Activated CD4-positive, alpha-beta T cell treated with anti-CD3 and anti-CD28 coated beads for 36 hours (primary cell): ENCODE measurements at regions of chr19 and their contacts with region 1.

Region 1: DNA sequence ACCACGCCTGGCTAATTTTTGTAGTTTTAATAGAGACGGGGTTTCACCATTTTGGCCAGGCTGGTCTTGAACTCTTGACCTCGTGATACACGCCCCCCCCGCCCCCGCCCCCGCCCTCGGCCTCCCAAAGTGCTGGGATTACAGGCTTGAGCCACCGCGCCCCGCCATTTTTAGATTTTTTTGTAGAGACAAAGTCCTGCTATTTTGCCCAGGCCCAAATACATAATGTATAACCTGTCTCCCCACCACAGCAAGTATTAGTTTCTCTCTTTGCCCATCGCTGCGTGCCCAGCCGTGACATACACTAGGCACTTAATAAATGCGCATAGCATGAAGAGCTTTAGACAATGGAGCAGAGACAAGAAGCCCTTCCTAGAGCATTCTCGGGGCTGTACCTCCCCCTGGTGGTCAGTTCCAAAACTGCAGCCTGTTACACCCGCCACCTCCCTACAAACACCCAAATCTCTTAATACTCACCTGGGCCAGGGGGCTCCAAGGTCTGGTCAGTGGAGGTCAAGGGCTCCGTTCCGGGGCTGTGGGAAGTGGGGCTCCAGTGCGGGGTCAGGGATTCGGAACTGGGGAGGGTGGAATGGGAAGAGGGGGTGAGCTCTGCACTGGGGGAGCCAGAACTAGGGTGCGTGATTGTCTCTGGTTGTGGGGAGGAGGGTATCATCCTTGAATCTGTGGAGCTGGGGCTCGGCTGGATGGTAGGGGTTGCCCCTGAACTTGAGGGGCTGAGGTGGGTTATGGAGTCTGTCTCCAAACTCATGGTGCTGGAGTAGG is 22.5 kb downstream of the IQCN start:
- DNase-seq: peak; percentile 89
- ATAC-seq: peak; percentile 95
- H3K4me3 Mint-ChIP-seq: no peak overlapping the region
- H3K27ac Mint-ChIP-seq: no peak overlapping the region
- H3K4me1 Mint-ChIP-seq: no peaks in the 10 kb centered on the region
- H3K27me3 Mint-ChIP-seq: peaks cover 21% of the 10 kb centered on the region

Region 2: DNA sequence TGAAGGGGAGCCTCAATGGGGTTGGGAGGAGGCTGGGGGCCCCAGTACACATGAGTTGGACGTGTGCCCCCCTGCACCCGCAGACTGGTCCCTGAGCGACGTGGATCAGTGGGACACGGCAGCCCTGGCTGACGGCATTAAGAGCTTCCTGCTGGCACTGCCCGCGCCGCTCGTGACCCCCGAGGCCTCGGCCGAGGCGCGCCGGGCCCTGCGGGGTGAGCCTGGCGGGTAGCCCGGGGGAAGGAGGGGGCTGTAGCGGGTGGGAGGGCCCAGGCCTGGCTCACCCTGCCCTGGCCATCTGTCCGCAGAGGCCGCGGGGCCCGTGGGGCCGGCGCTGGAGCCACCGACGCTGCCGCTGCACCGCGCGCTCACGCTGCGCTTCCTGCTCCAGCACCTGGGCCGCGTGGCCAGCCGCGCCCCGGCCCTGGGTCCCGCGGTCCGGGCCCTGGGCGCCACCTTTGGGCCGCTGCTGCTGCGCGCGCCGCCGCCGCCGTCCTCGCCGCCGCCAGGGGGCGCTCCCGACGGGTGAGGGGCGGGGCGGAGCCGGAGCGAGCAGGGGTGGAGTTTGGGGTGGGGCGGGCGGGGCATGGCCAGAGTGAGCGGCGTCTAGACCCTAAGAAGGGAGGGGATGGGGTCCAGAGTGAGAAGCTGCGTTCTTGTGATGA is 90.7 kb before region 1 on chr19:
- CTCF ChIA-PET with region 1: interaction called, 3 read pairs
- POLR2A ChIA-PET with region 1: no interaction called
- intact Hi-C with region 1: loop called in 1 of 2 experiments (anchors 1 kb)
- DNase-seq: peak; percentile 89
- ATAC-seq: peak; percentile 93
- H3K4me3 Mint-ChIP-seq: peak overlapping the region; percentile 70
- H3K27ac Mint-ChIP-seq: no peak overlapping the region
- H3K4me1 Mint-ChIP-seq: peaks cover 9% of the 10 kb centered on the region
- H3K27me3 Mint-ChIP-seq: no peaks in the 10 kb centered on the region

Region 3: GRCh38 chr19:18220632-18221275 is 31.0 kb before region 1 on chr19:
- CTCF ChIA-PET with region 1: no interaction called
- POLR2A ChIA-PET with region 1: no interaction called
- intact Hi-C with region 1: no loop called
- DNase-seq: peak; percentile 50
- ATAC-seq: no peak
- H3K4me3 Mint-ChIP-seq: no peak overlapping the region
- H3K27ac Mint-ChIP-seq: no peak overlapping the region
- H3K4me1 Mint-ChIP-seq: peaks cover 14% of the 10 kb centered on the region
- H3K27me3 Mint-ChIP-seq: peaks cover 27% of the 10 kb centered on the region

Region 4: GRCh38 chr19:18290302-18291018 is 38.7 kb after region 1 on chr19:
- CTCF ChIA-PET with region 1: no interaction called
- POLR2A ChIA-PET with region 1: no interaction called
- intact Hi-C with region 1: no loop called
- DNase-seq: peak; percentile 98
- ATAC-seq: peak; percentile 62
- H3K4me3 Mint-ChIP-seq: peak overlapping the region; percentile 87
- H3K27ac Mint-ChIP-seq: peak overlapping the region; percentile 99
- H3K4me1 Mint-ChIP-seq: peaks cover 72% of the 10 kb centered on the region
- H3K27me3 Mint-ChIP-seq: no peaks in the 10 kb centered on the region